Ovary (tissue), 10 donors: ENCODE measurements at regions of chr10 and their contacts with region 1.

Region 1: GRCh38 chr10:131129558-131129957 is 182.0 kb downstream of the TCERG1L start:
- DNase-seq: no peak
- H3K4me3 ChIP-seq: no peak overlapping the region
- H3K27ac ChIP-seq: no peak overlapping the region
- H3K4me1 ChIP-seq: peaks cover 18% of the 10 kb centered on the region
- H3K27me3 ChIP-seq: no peaks in the 10 kb centered on the region
- CTCF ChIP-seq: no peak
- EP300 ChIP-seq: no peak
- POLR2A ChIP-seq: no peak

Region 2: GRCh38 chr10:131111471-131112080 is 18.0 kb before region 1 on chr10:
- intact Hi-C with region 1: loop called in 1 of 4 experiments (anchors 1 kb)
- DNase-seq: no peak
- H3K4me3 ChIP-seq: no peak overlapping the region
- H3K27ac ChIP-seq: no peak overlapping the region
- H3K4me1 ChIP-seq: peaks cover 2% of the 10 kb centered on the region
- H3K27me3 ChIP-seq: no peaks in the 10 kb centered on the region
- CTCF ChIP-seq: no peak
- EP300 ChIP-seq: no peak
- POLR2A ChIP-seq: no peak